Activated CD4-positive, alpha-beta memory T cell treated with anti-CD3 and anti-CD28 coated beads, Interleukin-2, amount 10 ng/mL, durations not matched to agents 7 days and 5 days (primary cell): ENCODE measurements at regions of chr1 and their contacts with region 1.

Region 1: GRCh38 chr1:180502360-180503273 is at the start of gene ACBD6:
- DNase-seq: peak; percentile 89
- H3K4me3 Mint-ChIP-seq: peak within 1 kb of the TSS; percentile 94
- H3K27ac Mint-ChIP-seq: peak within 1 kb of the TSS; percentile 94
- H3K4me1 Mint-ChIP-seq: peaks cover 35% of the 10 kb centered on the region
- H3K27me3 Mint-ChIP-seq: peaks cover 4% of the 10 kb centered on the region
- total RNA-seq, gene ACBD6: 27.5 to 33.2 TPM

Region 2: DNA sequence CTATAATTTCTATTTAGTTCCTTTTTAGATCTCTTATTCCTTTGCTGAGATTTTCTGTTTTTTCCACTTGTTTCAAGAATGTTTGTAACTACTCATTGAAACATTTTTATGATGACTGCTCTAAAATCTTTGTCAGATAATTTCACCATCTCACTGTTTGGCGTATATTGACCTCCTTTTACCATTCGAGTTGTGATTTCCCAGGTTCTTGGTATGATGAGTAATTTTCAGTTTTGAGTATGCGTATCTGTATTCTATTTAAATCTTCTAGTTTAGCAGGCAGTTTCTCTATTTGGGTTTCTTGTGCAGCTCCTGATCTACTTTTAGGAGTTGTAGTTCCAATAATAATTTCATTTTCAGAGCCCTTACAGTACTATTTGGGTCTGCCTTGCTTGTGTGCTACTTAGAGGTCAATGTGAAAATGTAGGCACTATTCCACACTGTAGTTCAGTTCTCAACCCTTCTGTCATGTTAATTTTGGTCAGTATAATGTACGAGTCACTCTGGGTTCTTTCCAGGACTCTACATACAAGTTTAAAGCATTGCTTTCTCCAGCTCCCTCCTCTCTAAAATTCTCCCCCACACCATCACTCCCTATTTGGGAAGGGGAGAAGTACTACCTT is 115.8 kb before region 1 on chr1:
- CTCF ChIA-PET with region 1: no interaction called
- POLR2A ChIA-PET with region 1: no interaction called
- DNase-seq: no peak
- H3K4me3 Mint-ChIP-seq: no peak overlapping the region
- H3K27ac Mint-ChIP-seq: peak overlapping the region; percentile 58
- H3K4me1 Mint-ChIP-seq: peaks cover 16% of the 10 kb centered on the region
- H3K27me3 Mint-ChIP-seq: no peaks in the 10 kb centered on the region

Region 3: DNA sequence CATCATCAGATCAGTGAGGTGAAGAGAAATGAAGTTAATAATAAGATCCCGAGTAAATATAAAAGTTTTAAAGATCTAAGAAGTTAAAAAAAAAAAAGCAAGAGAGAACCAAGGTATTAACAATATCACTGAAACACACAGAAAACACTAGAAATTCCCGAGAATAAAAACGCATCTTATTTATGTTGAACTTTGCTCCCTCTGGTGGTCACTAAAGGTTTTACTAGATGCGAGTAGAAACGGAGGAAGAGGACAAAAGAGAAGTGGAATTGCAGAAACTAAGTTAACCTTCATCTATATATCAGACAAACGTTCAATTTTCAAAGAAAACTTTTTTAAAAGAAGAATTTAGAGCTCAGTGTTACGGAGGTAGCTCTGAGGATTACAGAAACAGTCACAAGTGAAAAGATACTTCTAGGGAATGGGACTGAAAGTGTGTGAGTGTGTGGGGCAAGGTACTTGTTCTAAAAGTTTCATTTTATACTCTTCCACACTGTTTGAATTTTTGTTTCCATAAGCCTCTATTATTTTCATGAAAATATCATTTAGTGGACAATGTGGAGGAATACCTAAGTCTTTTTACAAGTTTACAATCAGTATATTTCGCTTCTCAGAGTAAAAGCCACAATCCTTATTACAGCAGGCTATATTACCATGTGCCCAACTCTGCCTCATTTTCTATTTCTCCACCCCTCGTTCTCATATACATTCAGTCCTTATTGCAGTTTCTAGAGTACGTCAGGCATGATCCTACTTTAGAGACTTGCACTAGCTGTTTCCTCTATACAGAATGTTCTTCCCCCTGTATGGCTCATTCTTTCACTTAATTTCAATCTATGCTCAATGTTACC is 20.0 kb before region 1 on chr1:
- CTCF ChIA-PET with region 1: interaction called, 14 read pairs
- POLR2A ChIA-PET with region 1: interaction called, 5 read pairs
- DNase-seq: no peak
- H3K4me3 Mint-ChIP-seq: no peak overlapping the region
- H3K27ac Mint-ChIP-seq: no peak overlapping the region
- H3K4me1 Mint-ChIP-seq: peaks cover 8% of the 10 kb centered on the region
- H3K27me3 Mint-ChIP-seq: no peaks in the 10 kb centered on the region

Region 4: DNA sequence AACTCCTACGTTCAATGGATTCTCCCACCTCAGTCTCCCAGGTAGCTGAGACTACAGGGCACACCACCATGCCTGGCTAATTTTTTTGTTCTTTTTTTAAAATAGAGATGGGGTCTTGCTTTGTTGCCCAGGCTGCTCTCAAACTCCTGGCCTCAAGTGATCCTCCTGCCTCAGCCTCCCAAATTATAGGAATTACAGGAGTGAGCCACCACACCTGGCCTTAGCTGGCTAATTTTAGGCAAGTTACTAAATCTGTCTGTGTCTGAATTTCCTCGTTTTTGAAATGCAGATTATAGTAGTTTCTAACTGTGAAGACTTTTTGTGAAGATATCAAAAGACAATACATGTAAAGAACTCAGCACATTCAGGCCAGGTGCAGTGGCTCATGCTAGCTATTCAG is 14.0 kb before region 1 on chr1:
- CTCF ChIA-PET with region 1: interaction called, 6 read pairs
- POLR2A ChIA-PET with region 1: interaction called, 15 read pairs
- DNase-seq: no peak
- H3K4me3 Mint-ChIP-seq: no peak overlapping the region
- H3K27ac Mint-ChIP-seq: no peak overlapping the region
- H3K4me1 Mint-ChIP-seq: no peaks in the 10 kb centered on the region
- H3K27me3 Mint-ChIP-seq: no peaks in the 10 kb centered on the region

Region 5: GRCh38 chr1:180515864-180516388 is 13.3 kb after region 1 on chr1:
- CTCF ChIA-PET with region 1: interaction called, 12 read pairs
- POLR2A ChIA-PET with region 1: interaction called, 9 read pairs
- DNase-seq: peak; percentile 62
- H3K4me3 Mint-ChIP-seq: no peak overlapping the region
- H3K27ac Mint-ChIP-seq: no peak overlapping the region
- H3K4me1 Mint-ChIP-seq: peaks cover 2% of the 10 kb centered on the region
- H3K27me3 Mint-ChIP-seq: peaks cover 7% of the 10 kb centered on the region

Region 6: GRCh38 chr1:180540697-180541594 is 38.3 kb after region 1 on chr1:
- CTCF ChIA-PET with region 1: no interaction called
- POLR2A ChIA-PET with region 1: no interaction called
- DNase-seq: no peak
- H3K4me3 Mint-ChIP-seq: no peak overlapping the region
- H3K27ac Mint-ChIP-seq: no peak overlapping the region
- H3K4me1 Mint-ChIP-seq: no peaks in the 10 kb centered on the region
- H3K27me3 Mint-ChIP-seq: peaks cover 9% of the 10 kb centered on the region

Region 7: GRCh38 chr1:180631766-180632325 is 129.2 kb after region 1 on chr1 and contains the start of gene XPR1:
- CTCF ChIA-PET with region 1: no interaction called
- POLR2A ChIA-PET with region 1: interaction called, 11 read pairs
- DNase-seq: peak; percentile 98
- H3K4me3 Mint-ChIP-seq: peak within 1 kb of the TSS; percentile 16
- H3K27ac Mint-ChIP-seq: peak within 1 kb of the TSS; percentile 81
- H3K4me1 Mint-ChIP-seq: peaks cover 6% of the 10 kb centered on the region
- H3K27me3 Mint-ChIP-seq: peaks cover 6% of the 10 kb centered on the region
- total RNA-seq, gene XPR1: 19.9 to 20.5 TPM

Region 8: GRCh38 chr1:180652792-180653191 is 150.2 kb after region 1 on chr1:
- CTCF ChIA-PET with region 1: no interaction called
- POLR2A ChIA-PET with region 1: no interaction called
- DNase-seq: no peak
- H3K4me3 Mint-ChIP-seq: no peak overlapping the region
- H3K27ac Mint-ChIP-seq: no peak overlapping the region
- H3K4me1 Mint-ChIP-seq: no peaks in the 10 kb centered on the region
- H3K27me3 Mint-ChIP-seq: no peaks in the 10 kb centered on the region